ENCODE measurements at regions of chr9 and their contacts with region 1.

Region 1: DNA sequence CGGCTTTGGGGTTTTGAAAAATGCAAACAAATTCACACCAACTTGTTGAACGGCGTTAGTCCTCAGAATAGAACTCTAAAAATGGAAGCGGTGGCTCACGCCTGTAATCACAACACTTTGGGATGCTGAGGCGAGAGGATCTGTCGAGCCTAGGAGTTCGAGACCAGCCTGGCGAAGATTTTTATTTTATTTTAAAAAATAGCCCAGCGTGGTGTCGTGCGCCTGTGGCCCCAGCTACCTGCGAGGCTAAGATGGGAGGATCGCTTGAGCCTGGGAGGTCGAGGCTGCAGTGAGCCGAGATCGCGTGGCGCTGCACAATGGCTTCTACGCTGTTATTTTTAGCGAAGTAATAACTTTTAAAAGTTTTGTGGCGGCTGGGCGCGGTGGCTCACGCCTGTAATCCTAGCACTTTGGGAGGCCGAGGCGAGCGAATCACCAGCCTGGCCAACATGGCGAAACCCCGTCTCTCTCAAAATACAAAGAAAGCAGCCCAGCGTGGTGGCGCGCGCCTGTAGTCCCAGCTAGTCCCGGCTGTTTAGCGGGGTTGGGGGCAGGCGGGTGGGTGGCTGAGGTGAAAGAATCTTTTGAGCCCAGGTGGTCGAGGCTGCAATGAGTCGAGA is 699 bp upstream of the PLIN2 start:
- DNase-seq: peak in 7 of 9 donors; percentile 12 to 44 (median 32)
- ATAC-seq: peak; percentile 44
- H3K4me3 ChIP-seq: peak overlapping the region; percentile 78
- H3K4me3 Mint-ChIP-seq: peak overlapping the region; percentile 80 to 96 (median 93)
- H3K27ac ChIP-seq: peak overlapping the region; percentile 94
- H3K27ac Mint-ChIP-seq: peak overlapping the region; percentile 60 to 97 (median 95)
- H3K4me1 ChIP-seq: peaks cover 24 to 26% of the 10 kb centered on the region in 2 donors
- H3K4me1 Mint-ChIP-seq: peaks cover 18 to 62% (median 48%) of the 10 kb centered on the region in 7 donors
- H3K27me3 ChIP-seq: no peaks in the 10 kb centered on the region
- H3K27me3 Mint-ChIP-seq: no peaks in the 10 kb centered on the region

Region 2: DNA sequence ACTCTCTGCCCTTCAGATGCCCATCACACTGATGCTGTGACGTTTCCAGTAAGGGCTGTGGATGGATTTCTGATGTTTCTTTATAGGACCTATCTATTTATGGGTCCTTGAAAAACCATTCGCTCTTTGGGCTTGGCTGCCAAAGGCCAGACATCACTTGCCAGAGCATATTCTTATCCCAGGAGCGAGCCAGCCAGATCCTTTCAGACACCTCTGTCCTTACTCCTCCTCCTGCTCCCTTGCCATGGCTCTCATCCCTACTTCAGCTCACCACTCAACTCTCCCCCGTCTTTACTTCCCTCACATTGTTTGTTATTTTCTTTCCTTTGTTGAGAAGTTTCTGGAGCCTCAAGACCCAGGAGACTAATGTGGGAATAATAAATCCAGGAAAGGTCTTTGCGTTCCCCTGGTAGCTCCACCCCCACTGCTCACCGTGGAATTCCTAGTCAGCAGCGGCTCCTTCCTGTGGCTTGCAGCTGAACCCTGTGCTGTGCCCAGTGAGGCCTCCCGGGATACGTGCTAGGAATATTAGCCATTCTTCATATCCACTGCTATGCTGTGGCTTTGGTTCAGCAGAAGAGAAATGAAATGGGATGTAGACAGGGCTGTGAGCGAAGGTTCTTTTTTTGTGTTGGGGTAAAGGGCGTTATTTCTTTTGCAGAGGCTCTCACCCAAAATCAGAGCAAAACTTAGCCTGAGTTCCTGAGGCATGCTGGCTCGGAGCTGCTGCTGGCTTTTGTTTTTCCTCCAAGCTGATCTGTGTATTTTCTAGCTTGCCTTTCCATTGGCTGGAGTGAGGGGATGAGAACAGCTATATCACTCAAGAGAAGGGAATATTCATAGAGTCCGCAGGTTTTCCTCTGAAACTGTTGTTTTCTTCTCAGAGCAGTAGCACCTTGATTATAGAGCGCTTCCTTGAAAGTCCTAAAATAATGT is 266.1 kb before region 1 on chr9:
- CTCF ChIA-PET with region 1: no interaction called
- POLR2A ChIA-PET with region 1: no interaction called
- intact Hi-C with region 1: no loop called
- DNase-seq: no peak
- ATAC-seq: no peak
- H3K4me3 ChIP-seq: no peak overlapping the region
- H3K4me3 Mint-ChIP-seq: no peak overlapping the region
- H3K27ac ChIP-seq: no peak overlapping the region
- H3K27ac Mint-ChIP-seq: no peak overlapping the region
- H3K4me1 ChIP-seq: no peaks in the 10 kb centered on the region
- H3K4me1 Mint-ChIP-seq: no peaks in the 10 kb centered on the region
- H3K27me3 ChIP-seq: no peaks in the 10 kb centered on the region
- H3K27me3 Mint-ChIP-seq: peaks cover 0 to 18% (median 16%) of the 10 kb centered on the region in 5 donors

Region 3: DNA sequence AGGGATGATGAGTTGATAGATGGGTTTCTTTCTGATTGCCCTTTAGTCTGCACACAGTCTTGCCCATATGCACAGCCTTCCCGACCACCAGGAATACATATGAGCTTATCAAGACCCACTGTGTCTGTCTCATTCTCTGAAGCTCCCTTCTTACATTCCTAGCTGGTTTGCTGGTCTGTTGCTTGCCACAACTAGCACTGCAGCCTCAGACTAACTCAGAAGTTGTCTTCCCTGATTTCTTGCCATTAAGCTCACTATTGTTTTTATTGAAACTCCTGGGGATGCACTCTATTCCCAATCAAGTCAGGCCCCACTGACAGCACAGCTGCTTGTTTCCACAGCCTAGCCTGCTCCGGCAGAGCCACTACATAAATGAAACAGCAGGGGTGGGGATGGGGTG is 192.4 kb before region 1 on chr9:
- CTCF ChIA-PET with region 1: no interaction called
- POLR2A ChIA-PET with region 1: no interaction called
- intact Hi-C with region 1: no loop called
- DNase-seq: no peak
- ATAC-seq: no peak
- H3K4me3 ChIP-seq: no peak overlapping the region
- H3K4me3 Mint-ChIP-seq: no peak overlapping the region
- H3K27ac ChIP-seq: no peak overlapping the region
- H3K27ac Mint-ChIP-seq: no peak overlapping the region
- H3K4me1 ChIP-seq: no peaks in the 10 kb centered on the region
- H3K4me1 Mint-ChIP-seq: no peaks in the 10 kb centered on the region
- H3K27me3 ChIP-seq: no peaks in the 10 kb centered on the region
- H3K27me3 Mint-ChIP-seq: peaks cover 0 to 24% (median 12%) of the 10 kb centered on the region in 5 donors

Region 4: GRCh38 chr9:19048966-19049916 is 78.8 kb before region 1 on chr9 and contains the start of gene RRAGA:
- CTCF ChIA-PET with region 1: interaction called, 4 read pairs
- POLR2A ChIA-PET with region 1: interaction called, 15 read pairs
- intact Hi-C with region 1: loop called (anchors 1 kb)
- DNase-seq: peak; percentile 90 to 96 (median 95)
- ATAC-seq: peak; percentile 95
- H3K4me3 ChIP-seq: peak within 1 kb of the TSS; percentile 88
- H3K4me3 Mint-ChIP-seq: peak within 1 kb of the TSS; percentile 92 to 99 (median 95)
- H3K27ac ChIP-seq: peak within 1 kb of the TSS; percentile 85
- H3K27ac Mint-ChIP-seq: peak within 1 kb of the TSS; percentile 97 to 100 (median 98)
- H3K4me1 ChIP-seq: peaks cover 20% of the 10 kb centered on the region in 2 donors
- H3K4me1 Mint-ChIP-seq: peaks cover 6 to 50% (median 42%) of the 10 kb centered on the region in 7 donors
- H3K27me3 ChIP-seq: no peaks in the 10 kb centered on the region
- H3K27me3 Mint-ChIP-seq: peaks cover 0 to 2% (median 0%) of the 10 kb centered on the region in 5 donors
- total RNA-seq, gene RRAGA: 25.9 to 53.6 (median 51.9) TPM

Region 5: DNA sequence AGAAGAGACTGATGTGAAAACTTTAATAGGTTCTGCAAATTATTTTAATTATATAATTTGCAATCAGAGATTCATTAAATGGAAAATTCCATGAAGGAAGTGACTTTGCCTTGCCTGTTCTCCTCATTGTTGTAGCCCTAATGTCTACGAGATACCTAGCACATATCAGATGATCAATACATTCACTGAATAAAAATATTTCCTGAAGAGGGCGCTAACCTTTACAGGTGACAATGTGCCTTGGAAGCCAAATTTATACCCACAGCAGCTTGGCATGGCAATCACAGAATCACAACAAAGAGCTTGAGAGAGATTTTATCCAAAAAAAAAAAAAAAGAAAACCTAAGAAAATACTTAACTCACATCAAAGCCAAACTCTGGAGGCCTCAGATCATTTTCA is 42.7 kb before region 1 on chr9:
- CTCF ChIA-PET with region 1: interaction called, 3 read pairs
- POLR2A ChIA-PET with region 1: no interaction called
- intact Hi-C with region 1: loop called in 1 of 2 experiments (anchors 5 kb)
- DNase-seq: peak in 7 of 9 donors; percentile 31 to 60 (median 52)
- ATAC-seq: peak; percentile 83
- H3K4me3 ChIP-seq: no peak overlapping the region
- H3K4me3 Mint-ChIP-seq: no peak overlapping the region
- H3K27ac ChIP-seq: no peak overlapping the region
- H3K27ac Mint-ChIP-seq: no peak overlapping the region
- H3K4me1 ChIP-seq: no peaks in the 10 kb centered on the region
- H3K4me1 Mint-ChIP-seq: peaks cover 0 to 7% (median 5%) of the 10 kb centered on the region in 7 donors
- H3K27me3 ChIP-seq: no peaks in the 10 kb centered on the region
- H3K27me3 Mint-ChIP-seq: no peaks in the 10 kb centered on the region

Region 6: GRCh38 chr9:19145881-19146280 is 17.9 kb after region 1 on chr9:
- CTCF ChIA-PET with region 1: interaction called, 3 read pairs
- POLR2A ChIA-PET with region 1: no interaction called
- intact Hi-C with region 1: loop called in 1 of 2 experiments (anchors 2 kb)
- DNase-seq: no peak
- ATAC-seq: no peak
- H3K4me3 ChIP-seq: no peak overlapping the region
- H3K4me3 Mint-ChIP-seq: no peak overlapping the region
- H3K27ac ChIP-seq: no peak overlapping the region
- H3K27ac Mint-ChIP-seq: no peak overlapping the region
- H3K4me1 ChIP-seq: no peaks in the 10 kb centered on the region
- H3K4me1 Mint-ChIP-seq: peaks cover 0 to 3% (median 0%) of the 10 kb centered on the region in 7 donors
- H3K27me3 ChIP-seq: no peaks in the 10 kb centered on the region
- H3K27me3 Mint-ChIP-seq: no peaks in the 10 kb centered on the region

Region 7: GRCh38 chr9:19161257-19162025 is 33.5 kb after region 1 on chr9:
- CTCF ChIA-PET with region 1: no interaction called
- POLR2A ChIA-PET with region 1: interaction called, 8 read pairs
- intact Hi-C with region 1: loop called (anchors 1 kb)
- DNase-seq: peak in 8 of 9 donors; percentile 25 to 63 (median 37)
- ATAC-seq: peak; percentile 94
- H3K4me3 ChIP-seq: no peak overlapping the region
- H3K4me3 Mint-ChIP-seq: peak overlapping the region; percentile 26 to 77 (median 53)
- H3K27ac ChIP-seq: peak overlapping the region; percentile 12
- H3K27ac Mint-ChIP-seq: peak overlapping the region; percentile 72 to 96 (median 81)
- H3K4me1 ChIP-seq: peaks cover 6 to 12% of the 10 kb centered on the region in 2 donors
- H3K4me1 Mint-ChIP-seq: peaks cover 12 to 27% (median 19%) of the 10 kb centered on the region in 7 donors
- H3K27me3 ChIP-seq: no peaks in the 10 kb centered on the region
- H3K27me3 Mint-ChIP-seq: no peaks in the 10 kb centered on the region

Region 8: GRCh38 chr9:19184144-19184917 is 56.3 kb after region 1 on chr9:
- CTCF ChIA-PET with region 1: interaction called, 3 read pairs
- POLR2A ChIA-PET with region 1: interaction called, 4 read pairs
- intact Hi-C with region 1: loop called in 1 of 2 experiments (anchors 2 kb)
- DNase-seq: peak; percentile 32 to 75 (median 47)
- ATAC-seq: peak; percentile 97
- H3K4me3 ChIP-seq: no peak overlapping the region
- H3K4me3 Mint-ChIP-seq: peak overlapping the region in 9 of 10 donors; percentile 3 to 66 (median 34)
- H3K27ac ChIP-seq: peak overlapping the region; percentile 62
- H3K27ac Mint-ChIP-seq: peak overlapping the region; percentile 83 to 97 (median 93)
- H3K4me1 ChIP-seq: peaks cover 11 to 17% of the 10 kb centered on the region in 2 donors
- H3K4me1 Mint-ChIP-seq: peaks cover 6 to 19% (median 13%) of the 10 kb centered on the region in 7 donors
- H3K27me3 ChIP-seq: no peaks in the 10 kb centered on the region
- H3K27me3 Mint-ChIP-seq: no peaks in the 10 kb centered on the region

Region 9: GRCh38 chr9:19379697-19380046 is 251.7 kb after region 1 on chr9:
- CTCF ChIA-PET with region 1: no interaction called
- POLR2A ChIA-PET with region 1: interaction called, 5 read pairs
- intact Hi-C with region 1: loop called (anchors 1 kb)
- DNase-seq: peak in 1 of 9 donors; percentile 39
- ATAC-seq: peak; percentile 59
- H3K4me3 ChIP-seq: peak overlapping the region; percentile 89
- H3K4me3 Mint-ChIP-seq: peak overlapping the region; percentile 92 to 99 (median 98)
- H3K27ac ChIP-seq: peak overlapping the region; percentile 84
- H3K27ac Mint-ChIP-seq: peak overlapping the region; percentile 97 to 100 (median 99)
- H3K4me1 ChIP-seq: peaks cover 13 to 24% of the 10 kb centered on the region in 2 donors
- H3K4me1 Mint-ChIP-seq: peaks cover 29 to 50% (median 41%) of the 10 kb centered on the region in 7 donors
- H3K27me3 ChIP-seq: no peaks in the 10 kb centered on the region
- H3K27me3 Mint-ChIP-seq: no peaks in the 10 kb centered on the region

Measured in naive thymus-derived CD4-positive, alpha-beta T cell (primary cell).